Heart right ventricle (tissue), 16 donors: ENCODE measurements at regions of chr12 and their contacts with region 1.

Region 1: DNA sequence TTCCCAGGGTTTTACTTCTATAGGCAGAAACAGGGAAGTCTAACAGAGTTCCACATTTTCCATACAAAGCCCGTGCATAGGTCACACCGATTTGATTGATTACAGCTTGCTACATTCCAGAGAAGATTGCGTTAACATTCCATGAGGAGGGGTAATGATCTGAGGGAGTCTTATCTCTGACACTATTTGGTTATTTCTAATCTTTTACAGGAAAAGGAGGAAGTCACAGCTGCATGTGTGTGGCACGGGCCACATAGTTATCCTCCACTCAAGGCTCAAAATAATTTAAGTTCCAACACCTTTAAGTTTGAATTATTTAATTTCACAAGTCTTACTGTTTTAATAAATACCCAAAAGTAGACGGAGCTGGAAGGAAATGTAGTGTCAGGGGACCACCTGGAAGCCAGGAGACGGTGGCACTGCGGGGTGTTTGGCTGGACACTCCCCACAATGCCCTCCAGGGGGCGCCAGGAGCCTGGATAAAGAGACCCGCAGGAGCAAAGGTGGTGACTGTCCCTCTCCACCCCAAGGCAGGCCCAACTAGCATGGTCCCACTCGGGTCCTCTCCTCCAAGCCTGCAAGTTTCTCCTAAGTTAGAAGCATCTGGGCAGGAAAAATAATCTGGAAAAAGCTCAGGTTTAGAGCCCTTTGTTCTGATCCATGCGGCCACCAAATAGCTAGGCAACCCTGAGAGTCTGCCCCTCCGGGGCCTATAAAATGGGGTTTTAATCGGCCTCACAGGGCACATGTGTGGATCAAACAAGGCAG is 20.2 kb downstream of the KRT8 start:
- DNase-seq: peak; percentile 73 to 82
- ATAC-seq: peak; percentile 74 to 89 (median 82)
- H3K4me3 ChIP-seq: no peak overlapping the region
- H3K27ac ChIP-seq: no peak overlapping the region
- H3K4me1 ChIP-seq: peaks cover 0 to 6% (median 5%) of the 10 kb centered on the region in 9 donors
- H3K27me3 ChIP-seq: peaks cover 0 to 25% (median 17%) of the 10 kb centered on the region in 7 donors
- CTCF ChIP-seq: peak; percentile 80 to 95 (median 91)

Region 2: GRCh38 chr12:52924764-52925716 is 40.3 kb after region 1 on chr12:
- intact Hi-C with region 1: loop called in 1 of 10 experiments (anchors 5 kb)
- DNase-seq: no peak
- ATAC-seq: peak in 4 of 8 donors; percentile 25 to 54 (median 45)
- H3K4me3 ChIP-seq: no peak overlapping the region
- H3K27ac ChIP-seq: no peak overlapping the region
- H3K4me1 ChIP-seq: peaks cover 0 to 31% (median 21%) of the 10 kb centered on the region in 9 donors
- H3K27me3 ChIP-seq: no peaks in the 10 kb centered on the region
- CTCF ChIP-seq: no peak

Region 3: DNA sequence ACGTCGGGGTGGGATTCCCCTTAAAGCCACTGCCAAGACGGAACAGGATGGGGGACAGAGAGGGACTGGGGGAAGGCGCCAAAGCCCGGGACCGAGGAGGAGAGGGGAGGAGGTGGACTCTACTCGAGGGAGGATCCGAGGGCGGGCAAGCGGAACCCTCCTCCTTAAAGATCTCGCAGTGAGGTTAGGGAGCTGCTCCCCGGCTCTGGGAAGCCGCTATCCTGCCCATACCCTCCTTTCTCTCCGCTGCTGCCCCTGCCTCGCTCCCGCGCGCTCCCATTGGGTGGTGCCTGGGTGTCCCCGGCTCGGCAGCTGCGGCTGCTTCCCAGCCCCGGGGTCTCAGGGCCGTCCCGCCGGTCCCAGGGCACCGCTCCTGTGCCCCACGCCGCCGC is 80.6 kb after region 1 on chr12:
- intact Hi-C with region 1: no loop called
- DNase-seq: no peak
- ATAC-seq: peak in 6 of 8 donors; percentile 24 to 73 (median 46)
- H3K4me3 ChIP-seq: peak overlapping the region in 8 of 10 donors; percentile 8 to 47 (median 36)
- H3K27ac ChIP-seq: peak overlapping the region in 1 of 10 donors; percentile 41
- H3K4me1 ChIP-seq: peaks cover 0 to 13% (median 0%) of the 10 kb centered on the region in 9 donors
- H3K27me3 ChIP-seq: peaks cover 0 to 45% (median 24%) of the 10 kb centered on the region in 7 donors
- CTCF ChIP-seq: no peak

Region 4: GRCh38 chr12:52980693-52981423 is 96.1 kb after region 1 on chr12:
- intact Hi-C with region 1: loop called (anchors 1 to 2 kb)
- DNase-seq: peak; percentile 82 to 92
- ATAC-seq: peak; percentile 89 to 97 (median 93)
- H3K4me3 ChIP-seq: no peak overlapping the region
- H3K27ac ChIP-seq: no peak overlapping the region
- H3K4me1 ChIP-seq: no peaks in the 10 kb centered on the region
- H3K27me3 ChIP-seq: peaks cover 0 to 32% (median 11%) of the 10 kb centered on the region in 7 donors
- CTCF ChIP-seq: peak; percentile 90 to 100 (median 97)